Aorta (tissue), 5 donors: ENCODE measurements at regions of chr6 and their contacts with region 1.

Region 1: GRCh38 chr6:83985308-83985713 is 48.3 kb upstream of the MRAP2 start:
- DNase-seq: no peak
- ATAC-seq: peak; percentile 72
- H3K4me3 ChIP-seq: no peak overlapping the region
- H3K27ac ChIP-seq: no peak overlapping the region
- H3K4me1 ChIP-seq: peaks cover 4 to 29% of the 10 kb centered on the region in 2 donors
- H3K27me3 ChIP-seq: no peaks in the 10 kb centered on the region

Region 2: GRCh38 chr6:83927470-83927869 is 57.8 kb before region 1 on chr6:
- intact Hi-C with region 1: no loop called
- DNase-seq: no peak
- ATAC-seq: no peak
- H3K4me3 ChIP-seq: no peak overlapping the region
- H3K27ac ChIP-seq: no peak overlapping the region
- H3K4me1 ChIP-seq: no peaks in the 10 kb centered on the region
- H3K27me3 ChIP-seq: no peaks in the 10 kb centered on the region

Region 3: DNA sequence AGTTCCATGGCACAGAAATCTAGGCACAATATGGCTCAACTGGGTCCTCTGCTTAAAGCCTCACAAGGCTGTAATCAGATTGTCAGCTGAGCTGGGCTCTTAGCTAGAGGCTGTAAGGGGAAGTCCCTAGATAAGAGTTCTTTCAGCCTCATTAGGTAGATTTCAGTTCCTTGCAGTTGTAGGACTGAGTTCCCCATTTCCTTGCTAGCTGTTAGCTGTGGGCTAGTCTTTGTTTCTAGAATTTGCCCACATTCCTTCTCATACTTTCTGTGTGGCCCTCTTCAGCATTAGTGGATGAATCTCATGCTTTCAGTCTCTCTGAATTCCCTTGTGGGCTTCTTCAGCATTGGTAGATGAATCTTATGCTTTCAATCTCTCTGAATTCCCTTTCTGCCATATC is 22.7 kb before region 1 on chr6:
- intact Hi-C with region 1: no loop called
- DNase-seq: no peak
- ATAC-seq: no peak
- H3K4me3 ChIP-seq: no peak overlapping the region
- H3K27ac ChIP-seq: no peak overlapping the region
- H3K4me1 ChIP-seq: no peaks in the 10 kb centered on the region
- H3K27me3 ChIP-seq: no peaks in the 10 kb centered on the region

Region 4: GRCh38 chr6:84027340-84028181 is 42.2 kb after region 1 on chr6:
- intact Hi-C with region 1: loop called (anchors 2 to 5 kb)
- DNase-seq: peak; percentile 74 to 86
- ATAC-seq: peak; percentile 69
- H3K4me3 ChIP-seq: no peak overlapping the region
- H3K27ac ChIP-seq: peak overlapping the region; percentile 61
- H3K4me1 ChIP-seq: peaks cover 3 to 10% of the 10 kb centered on the region in 2 donors
- H3K27me3 ChIP-seq: no peaks in the 10 kb centered on the region